ENCODE measurements at regions of chr14 and their contacts with region 1.

Region 1: DNA sequence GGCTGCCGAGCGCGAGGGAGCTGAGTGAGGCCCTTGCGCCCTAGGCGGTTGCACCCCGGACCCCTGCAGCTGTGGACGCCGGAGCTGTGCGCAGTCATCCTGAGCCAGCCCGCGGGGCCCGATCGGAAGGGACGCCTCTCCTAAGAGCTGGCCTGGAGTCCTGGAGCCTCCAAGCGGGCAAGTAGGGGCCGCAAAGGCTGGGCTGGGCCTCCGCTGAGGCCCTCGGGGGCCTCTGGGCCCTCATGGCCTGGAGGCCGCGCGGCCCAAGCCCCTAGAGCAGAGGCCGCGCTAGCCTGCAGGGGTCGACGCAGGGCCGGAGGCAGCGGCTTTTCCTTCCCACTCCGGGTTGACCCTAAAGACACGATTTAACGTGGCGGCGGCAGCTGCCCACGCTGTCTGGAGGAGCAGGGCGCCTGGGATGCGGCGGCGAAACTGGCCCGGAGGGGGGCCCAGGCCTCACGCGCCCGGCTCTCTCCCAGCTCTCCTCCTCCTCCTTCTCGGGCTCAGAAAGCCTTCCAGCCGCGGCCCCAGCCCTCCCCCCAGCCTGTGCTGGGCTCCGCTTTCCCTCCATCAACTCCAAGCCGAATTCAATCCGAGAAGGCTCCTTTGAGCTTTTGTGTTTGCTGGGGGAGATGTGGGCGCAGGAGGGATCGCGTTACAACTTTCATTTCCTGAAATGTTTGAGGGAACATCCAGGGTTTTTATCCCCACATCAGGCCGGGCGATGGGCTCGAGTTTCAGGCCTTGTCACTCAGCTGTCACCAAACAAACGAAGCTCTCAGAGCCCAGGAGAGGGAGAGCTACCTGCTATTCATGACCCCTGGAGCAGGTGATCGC is 11.6 kb downstream of the SIX1 start:
- DNase-seq: no peak
- H3K4me3 ChIP-seq: peak overlapping the region; percentile 30 to 42
- H3K27ac ChIP-seq: peak overlapping the region; percentile 49 to 51
- H3K4me1 ChIP-seq: peaks cover 0 to 32% (median 18%) of the 10 kb centered on the region in 4 donors
- H3K27me3 ChIP-seq: peaks cover 0 to 10% of the 10 kb centered on the region in 2 donors
- CTCF ChIP-seq: no peak

Region 2: GRCh38 chr14:60777856-60778578 is 140.3 kb after region 1 on chr14:
- intact Hi-C with region 1: no loop called
- DNase-seq: no peak
- H3K4me3 ChIP-seq: no peak overlapping the region
- H3K27ac ChIP-seq: peak overlapping the region; percentile 36 to 56
- H3K4me1 ChIP-seq: peaks cover 0 to 31% (median 8%) of the 10 kb centered on the region in 4 donors
- H3K27me3 ChIP-seq: no peaks in the 10 kb centered on the region
- CTCF ChIP-seq: no peak

Region 3: GRCh38 chr14:61196792-61197191 is 559.1 kb after region 1 on chr14:
- intact Hi-C with region 1: loop called (anchors 10 kb)
- DNase-seq: no peak
- H3K4me3 ChIP-seq: no peak overlapping the region
- H3K27ac ChIP-seq: no peak overlapping the region
- H3K4me1 ChIP-seq: no peaks in the 10 kb centered on the region
- H3K27me3 ChIP-seq: no peaks in the 10 kb centered on the region
- CTCF ChIP-seq: peak in 1 of 2 experiments; percentile 23

Measured in tibial artery (tissue), 4 donors.